ENCODE measurements at regions of chr1 and their contacts with region 1.

Region 1: DNA sequence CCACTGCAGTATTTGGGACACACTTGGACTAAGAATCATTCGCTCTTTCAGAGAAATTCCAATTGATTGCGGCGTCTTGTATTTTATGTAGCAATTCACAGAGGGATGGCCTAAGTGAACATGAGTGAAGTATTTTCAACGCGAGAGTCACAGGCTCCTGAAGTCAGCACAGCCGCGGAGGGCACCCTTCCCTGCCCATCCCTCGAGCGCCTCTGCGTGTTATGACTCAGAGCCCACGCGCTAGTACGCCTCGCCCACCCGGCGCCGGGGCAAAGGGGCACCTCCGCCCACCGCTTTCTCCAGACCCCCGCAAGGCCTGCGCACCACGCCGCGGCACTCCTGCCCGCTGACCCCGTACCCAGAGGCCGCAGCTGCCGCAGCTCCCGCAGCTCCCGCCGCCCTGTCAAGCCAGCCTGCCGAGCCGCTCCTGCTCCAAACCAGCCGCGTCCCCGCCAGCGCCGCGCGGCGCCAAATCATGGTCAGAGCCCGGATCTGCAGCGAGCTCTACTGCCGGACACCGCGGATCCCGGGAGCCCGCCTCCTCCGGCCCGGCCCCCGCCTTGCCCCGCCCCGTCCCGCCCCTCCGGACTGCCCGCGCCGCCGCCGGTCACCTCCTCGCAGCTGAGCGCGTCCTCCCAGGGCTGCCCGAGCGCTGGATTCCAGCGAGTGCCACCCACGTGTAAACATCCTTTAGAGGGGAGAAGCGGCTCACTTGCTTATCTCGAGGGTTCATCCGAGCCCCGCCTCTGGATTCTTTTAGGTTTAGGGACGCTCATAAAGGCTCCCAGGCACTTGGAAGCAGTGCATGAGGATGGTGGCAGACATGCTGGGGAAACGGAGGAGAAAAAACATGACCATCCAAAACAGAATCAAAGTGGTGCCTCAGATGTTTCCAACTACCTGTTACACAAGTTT is at the start of gene GLRX2:
- DNase-seq: peak; percentile 30
- ATAC-seq: peak; percentile 98
- H3K4me3 ChIP-seq: peak within 1 kb of the TSS; percentile 85
- H3K27ac ChIP-seq: peak within 1 kb of the TSS; percentile 90
- H3K4me1 ChIP-seq: peaks cover 22% of the 10 kb centered on the region
- H3K27me3 ChIP-seq: no peaks in the 10 kb centered on the region
- CTCF ChIP-seq: no peak; the same call in 1 of the 2 replicates
- total RNA-seq, gene GLRX2: 40.1 TPM

Region 2: DNA sequence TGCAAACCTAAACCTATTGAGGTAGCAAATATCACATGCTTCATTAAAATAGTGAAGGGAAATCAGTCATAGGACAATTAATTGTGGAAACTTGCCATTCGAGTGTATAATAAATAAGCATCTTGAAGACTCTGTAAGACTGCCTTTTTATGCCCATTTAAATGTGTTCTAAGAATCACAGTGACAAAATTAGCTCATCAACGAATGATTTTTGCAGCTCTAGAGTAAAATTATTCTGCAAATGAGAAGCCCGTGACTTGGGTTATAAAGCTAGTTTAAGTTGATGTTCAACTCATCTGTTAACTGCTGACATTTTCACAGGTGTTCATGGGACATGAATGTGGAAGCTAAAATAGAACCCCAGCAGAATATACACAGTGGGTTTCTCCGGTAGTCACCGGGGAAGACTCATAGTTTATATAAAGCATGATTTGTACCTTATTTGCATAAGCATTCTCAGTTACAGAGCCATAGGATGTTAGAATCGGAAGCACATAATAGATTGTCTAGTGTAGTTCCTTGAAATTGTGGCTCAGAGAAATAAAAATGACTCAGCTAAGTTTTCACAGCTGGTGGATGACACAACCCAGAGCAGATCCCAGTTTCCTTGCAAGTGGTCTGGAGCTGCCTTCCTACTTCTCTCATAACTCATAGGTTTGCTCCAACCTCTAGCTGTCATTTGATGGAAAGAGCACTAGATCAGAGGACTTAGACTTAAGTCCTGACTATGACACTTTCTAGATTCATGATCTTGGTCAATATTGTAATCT is 153.3 kb before region 1 on chr1:
- CTCF ChIA-PET with region 1: no interaction called
- POLR2A ChIA-PET with region 1: no interaction called
- in situ Hi-C with region 1: no loop called
- intact Hi-C with region 1: no loop called
- DNase-seq: peak; percentile 35
- ATAC-seq: no peak
- H3K4me3 ChIP-seq: no peak overlapping the region
- H3K27ac ChIP-seq: no peak overlapping the region
- H3K4me1 ChIP-seq: no peaks in the 10 kb centered on the region; the same call in 1 of the 2 replicates
- H3K27me3 ChIP-seq: no peaks in the 10 kb centered on the region
- CTCF ChIP-seq: no peak

Region 3: DNA sequence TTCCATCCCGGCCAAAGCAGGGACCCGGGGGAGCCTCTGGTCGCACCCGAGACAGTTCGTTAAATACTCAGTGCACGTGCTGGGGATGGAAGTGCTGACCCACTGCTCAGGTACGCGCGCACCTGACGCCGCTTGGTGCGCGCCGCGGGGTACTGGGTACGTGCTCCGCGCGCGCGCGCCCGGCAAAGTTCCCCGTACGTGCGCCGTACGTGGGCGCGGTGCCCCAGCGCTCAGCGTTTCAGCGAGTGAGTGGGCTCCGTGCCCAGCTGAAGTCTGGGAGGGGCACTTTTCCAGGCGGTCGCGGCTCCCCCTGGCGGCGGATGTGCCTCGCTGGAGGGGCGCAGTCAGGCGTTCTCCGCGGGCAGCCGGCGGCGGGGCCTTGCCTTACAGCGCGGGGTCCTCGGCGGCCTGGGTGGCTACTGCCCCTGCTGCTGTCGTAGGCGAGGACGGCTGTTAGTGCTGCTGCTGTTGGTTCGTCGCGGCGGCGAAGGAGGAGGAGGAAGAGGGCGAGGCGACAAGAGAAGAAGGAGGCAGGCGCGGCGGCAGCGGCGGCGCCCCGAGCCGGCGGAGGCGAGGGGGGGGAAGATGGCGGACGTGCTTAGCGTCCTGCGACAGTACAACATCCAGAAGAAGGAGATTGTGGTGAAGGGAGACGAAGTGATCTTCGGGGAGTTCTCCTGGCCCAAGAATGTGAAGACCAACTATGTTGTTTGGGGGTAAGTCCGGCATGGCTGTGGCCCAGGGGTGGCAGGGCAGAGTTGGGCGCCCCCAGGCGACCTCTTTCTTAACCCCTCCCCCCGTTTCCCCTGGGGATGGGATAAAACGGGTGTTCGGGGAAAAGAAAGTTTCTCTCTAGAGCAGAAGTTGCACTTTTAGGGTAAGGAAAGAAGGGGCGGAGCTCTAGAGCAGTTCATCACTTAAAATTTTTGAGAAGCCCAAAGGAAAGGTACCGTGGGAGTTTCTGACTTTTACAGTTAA is 16.7 kb after region 1 on chr1 and contains the start of gene CDC73:
- CTCF ChIA-PET with region 1: interaction called, 4 read pairs
- POLR2A ChIA-PET with region 1: interaction called, 3 read pairs
- in situ Hi-C with region 1: no loop called
- intact Hi-C with region 1: loop called (anchors 1 kb)
- DNase-seq: peak; percentile 78
- ATAC-seq: peak; percentile 98
- H3K4me3 ChIP-seq: peak within 1 kb of the TSS; percentile 96 to 100
- H3K27ac ChIP-seq: peak within 1 kb of the TSS; percentile 98
- H3K4me1 ChIP-seq: peaks cover 17% of the 10 kb centered on the region
- H3K27me3 ChIP-seq: no peaks in the 10 kb centered on the region
- CTCF ChIP-seq: peak; percentile 94
- total RNA-seq, gene CDC73: 78.2 TPM

Region 4: DNA sequence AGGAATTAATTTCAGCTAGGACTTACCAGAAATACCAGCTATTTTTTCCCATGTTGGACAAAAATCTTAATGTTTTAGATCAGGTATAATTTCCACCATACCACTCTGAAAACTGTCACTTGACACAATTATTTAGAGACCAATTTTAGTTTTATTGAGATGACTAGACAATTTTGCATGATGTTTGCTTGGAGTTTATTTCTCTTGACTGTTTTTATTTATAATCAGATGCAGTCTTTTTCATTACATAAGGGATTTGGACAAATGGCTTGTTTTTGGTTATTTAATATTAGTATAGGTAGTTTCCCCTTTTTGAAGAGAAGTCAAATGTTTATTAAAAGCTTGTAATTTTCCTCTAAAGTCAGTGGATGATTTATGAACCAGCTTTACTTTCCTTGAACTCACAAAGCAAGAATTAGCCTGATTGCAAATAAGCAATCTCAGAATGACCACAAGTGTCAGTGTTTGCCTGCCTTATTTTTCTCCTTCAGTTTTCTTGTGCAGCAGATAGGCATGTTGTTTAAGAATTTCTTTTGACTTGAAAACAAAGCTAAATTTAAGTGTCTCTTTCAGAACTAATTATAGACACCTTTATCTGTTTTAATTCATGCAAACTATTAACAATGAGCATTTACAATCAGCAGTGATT is 85.1 kb after region 1 on chr1:
- CTCF ChIA-PET with region 1: no interaction called
- POLR2A ChIA-PET with region 1: interaction called, 16 read pairs
- in situ Hi-C with region 1: no loop called
- intact Hi-C with region 1: no loop called
- DNase-seq: no peak
- ATAC-seq: no peak
- H3K4me3 ChIP-seq: no peak overlapping the region
- H3K27ac ChIP-seq: no peak overlapping the region
- H3K4me1 ChIP-seq: peaks cover 14% of the 10 kb centered on the region
- H3K27me3 ChIP-seq: no peaks in the 10 kb centered on the region
- CTCF ChIP-seq: no peak; the same call in 1 of the 2 replicates

Measured in Panc1 (cell line).